Breast epithelium (tissue), 4 donors: ENCODE measurements at regions of chr16 and their contacts with region 1.

Region 1: DNA sequence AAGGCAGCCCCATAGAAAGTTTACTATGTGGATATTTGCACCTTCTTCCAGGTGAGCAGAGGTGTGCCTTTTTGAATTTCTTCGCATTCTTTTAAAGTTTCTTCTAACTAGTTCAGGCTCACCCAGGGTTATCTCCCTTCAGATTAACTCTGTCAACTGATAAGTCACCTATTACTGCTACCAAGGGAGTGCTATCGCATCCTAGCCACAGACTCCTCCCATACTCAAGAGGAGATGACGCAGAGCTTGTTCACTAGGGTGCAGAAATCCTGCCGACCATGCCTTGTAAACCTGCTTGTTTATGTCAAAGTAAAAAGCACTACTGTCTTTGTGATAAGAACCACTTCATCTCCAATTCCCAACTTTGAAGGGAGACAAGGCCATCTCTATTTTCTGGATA is 390.1 kb downstream of the RBFOX1 start:
- DNase-seq: no peak
- H3K4me3 ChIP-seq: no peak overlapping the region
- H3K27ac ChIP-seq: no peak overlapping the region
- H3K4me1 ChIP-seq: no peaks in the 10 kb centered on the region
- H3K27me3 ChIP-seq: no peaks in the 10 kb centered on the region
- CTCF ChIP-seq: no peak
- POLR2A ChIP-seq: no peak

Region 2: DNA sequence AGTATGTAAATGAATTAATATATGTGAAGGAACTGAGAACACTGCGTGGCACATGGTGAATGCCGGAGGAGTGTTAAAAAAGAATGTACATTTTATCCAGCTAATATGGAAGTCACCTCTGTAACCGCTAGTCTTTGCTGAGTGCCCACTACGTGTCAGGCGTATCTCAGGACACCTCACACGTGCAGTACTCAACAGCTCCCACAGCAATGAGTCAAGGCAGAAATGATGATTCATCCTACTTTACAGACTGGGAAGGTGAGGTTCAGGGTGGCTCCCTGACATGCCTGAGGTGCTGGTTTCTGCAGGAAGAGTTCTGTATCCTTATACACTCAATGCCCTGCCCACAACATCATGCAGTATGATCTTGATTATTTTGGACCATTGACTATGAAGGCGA is 1855.7 kb after region 1 on chr16:
- intact Hi-C with region 1: loop called (anchors 10 kb)
- DNase-seq: no peak
- H3K4me3 ChIP-seq: no peak overlapping the region
- H3K27ac ChIP-seq: no peak overlapping the region
- H3K4me1 ChIP-seq: no peaks in the 10 kb centered on the region
- H3K27me3 ChIP-seq: no peaks in the 10 kb centered on the region
- CTCF ChIP-seq: no peak
- POLR2A ChIP-seq: no peak